ENCODE measurements at regions of chr5 and their contacts with region 1.

Region 1: DNA sequence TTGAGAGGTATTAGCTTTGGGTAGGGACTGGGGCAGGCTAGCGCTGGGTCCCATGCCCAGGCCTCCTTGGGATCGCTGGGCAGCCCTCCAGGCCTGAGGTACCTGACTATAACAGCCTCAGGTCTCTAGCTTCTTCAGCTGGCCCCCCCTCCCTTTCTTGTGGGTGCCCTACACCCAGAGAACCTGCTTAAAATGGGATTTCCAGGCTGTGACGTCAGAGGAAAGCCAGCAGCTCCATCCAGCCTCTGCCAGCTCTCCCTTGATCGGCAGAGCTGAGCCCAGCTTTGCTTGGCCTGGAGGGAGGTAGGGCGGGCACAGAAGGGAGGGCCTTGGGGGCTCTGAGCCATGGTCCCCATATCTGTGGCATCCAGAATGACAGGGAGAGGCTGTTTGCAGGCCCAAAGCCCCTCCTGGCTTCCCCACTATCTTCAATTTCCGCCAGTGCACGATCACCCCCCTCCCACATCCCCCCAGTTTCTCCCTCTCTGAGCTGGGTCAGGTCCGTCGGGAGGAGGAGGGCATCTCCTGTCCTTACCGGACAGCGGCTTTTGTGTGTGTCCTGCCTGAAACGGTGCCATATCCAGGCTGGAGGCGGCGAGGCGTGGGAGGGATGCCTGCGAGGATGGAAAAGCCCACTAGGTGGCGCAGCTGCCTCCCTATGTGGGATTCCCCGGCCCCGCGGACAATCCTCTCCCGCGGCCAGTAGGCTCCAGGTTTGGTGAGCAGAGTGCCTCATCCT is 10.8 kb downstream of the REEP2 start:
- DNase-seq: peak; percentile 84 to 92
- H3K4me3 ChIP-seq: no peak overlapping the region
- H3K4me3 Mint-ChIP-seq: no peak overlapping the region
- H3K27ac Mint-ChIP-seq: no peak overlapping the region
- H3K4me1 ChIP-seq: peaks cover 9% of the 10 kb centered on the region
- H3K4me1 Mint-ChIP-seq: no peaks in the 10 kb centered on the region
- H3K27me3 ChIP-seq: no peaks in the 10 kb centered on the region
- H3K27me3 Mint-ChIP-seq: no peaks in the 10 kb centered on the region
- CTCF ChIP-seq: peak; percentile 87 to 97

Region 2: GRCh38 chr5:138438724-138439476 is 10.8 kb before region 1 on chr5 and contains the start of gene REEP2:
- CTCF ChIA-PET with region 1: interaction called, 12 read pairs
- POLR2A ChIA-PET with region 1: no interaction called
- intact Hi-C with region 1: no loop called
- DNase-seq: peak; percentile 43 to 73
- H3K4me3 ChIP-seq: peak within 1 kb of the TSS; percentile 56
- H3K4me3 Mint-ChIP-seq: peak within 1 kb of the TSS; percentile 78
- H3K27ac Mint-ChIP-seq: peak within 1 kb of the TSS; percentile 51
- H3K4me1 ChIP-seq: peaks cover 4% of the 10 kb centered on the region; the same call in 1 of the 2 replicates
- H3K4me1 Mint-ChIP-seq: no peaks in the 10 kb centered on the region
- H3K27me3 ChIP-seq: no peaks in the 10 kb centered on the region
- H3K27me3 Mint-ChIP-seq: no peaks in the 10 kb centered on the region
- CTCF ChIP-seq: no peak
- total RNA-seq, gene REEP2: 3.8 and 4.5 TPM in 2 replicates

Region 3: DNA sequence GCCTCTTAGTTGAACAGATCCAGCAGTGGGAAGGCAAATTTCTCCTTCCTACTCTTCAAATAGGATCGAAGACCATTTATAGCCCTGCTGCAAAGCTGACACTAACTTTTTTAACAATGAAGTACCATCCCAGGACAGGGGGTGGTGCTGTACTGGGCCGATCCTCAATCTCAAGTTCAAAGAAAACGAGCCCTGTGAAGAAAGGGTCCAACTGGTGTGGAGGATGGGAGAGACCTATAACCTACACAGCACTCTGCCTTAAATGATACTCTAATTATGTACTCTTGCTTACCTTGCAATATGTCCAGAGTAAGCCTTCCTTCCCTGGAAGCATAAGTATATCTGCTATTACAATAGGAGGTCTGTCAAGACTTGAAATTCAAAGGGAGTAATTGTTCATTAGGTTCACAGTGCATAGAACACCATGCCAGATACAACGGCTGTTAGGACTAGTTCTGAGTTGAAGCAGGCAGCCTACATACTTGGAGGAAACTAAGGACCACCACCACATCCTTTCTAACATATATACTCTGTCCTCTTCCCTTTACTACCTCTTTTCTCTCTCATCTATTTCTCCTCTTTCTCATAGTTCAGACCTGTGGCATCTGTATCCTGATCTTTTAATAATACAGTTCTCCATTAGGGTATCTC is 87.1 kb after region 1 on chr5:
- CTCF ChIA-PET with region 1: no interaction called
- POLR2A ChIA-PET with region 1: no interaction called
- intact Hi-C with region 1: no loop called
- DNase-seq: peak in 1 of 2 experiments; percentile 32
- H3K4me3 ChIP-seq: no peak overlapping the region
- H3K4me3 Mint-ChIP-seq: no peak overlapping the region
- H3K27ac Mint-ChIP-seq: no peak overlapping the region
- H3K4me1 ChIP-seq: peaks cover 28% of the 10 kb centered on the region
- H3K4me1 Mint-ChIP-seq: peaks cover 12% of the 10 kb centered on the region
- H3K27me3 ChIP-seq: no peaks in the 10 kb centered on the region
- H3K27me3 Mint-ChIP-seq: no peaks in the 10 kb centered on the region
- CTCF ChIP-seq: peak; percentile 34 to 45

Measured in Caco-2 (cell line).